SK-N-SH (cell line): ENCODE measurements at regions of chr13 and their contacts with region 1.

Region 1: DNA sequence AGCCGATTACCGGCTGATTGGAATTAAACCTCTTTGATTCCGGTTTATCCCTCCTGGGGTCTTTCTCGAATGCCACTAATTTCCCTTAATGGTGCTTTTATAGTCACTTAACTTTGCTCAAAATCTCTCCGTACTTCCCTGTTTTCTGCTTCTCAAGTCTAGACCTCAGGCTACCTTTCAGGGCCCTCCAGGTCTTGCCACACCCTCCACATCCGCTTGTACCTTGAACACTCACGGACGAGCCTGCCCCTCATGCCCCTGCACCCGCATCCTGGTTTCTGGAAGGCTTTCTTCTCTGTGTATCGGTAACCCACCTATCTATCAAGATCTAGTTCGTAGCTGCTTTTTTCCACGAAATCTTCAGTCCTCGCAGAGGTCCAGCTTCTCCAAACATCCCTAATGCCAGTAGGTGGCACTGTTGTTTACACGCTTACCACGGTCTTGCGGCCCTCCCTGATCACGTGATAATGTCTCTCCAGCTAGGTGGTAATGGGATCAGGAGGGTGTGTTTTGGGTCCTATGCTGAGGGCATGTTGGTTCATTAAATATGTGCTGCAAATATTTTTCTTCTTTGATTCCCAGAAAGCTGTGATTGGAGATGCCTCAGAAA is 13.8 kb downstream of the ATP12A start:
- DNase-seq: peak; percentile 84
- H3K4me3 ChIP-seq: peak overlapping the region in 1 of 2 experiments; percentile 29; a peak in 1 of 4 replicates
- H3K27ac ChIP-seq: no peak overlapping the region
- H3K4me1 ChIP-seq: no peaks in the 10 kb centered on the region; a peak in 1 of 4 replicates
- H3K27me3 ChIP-seq: peaks cover 35% of the 10 kb centered on the region; the same call in 1 of the 2 replicates
- CTCF ChIP-seq: peak; percentile 67
- EP300 ChIP-seq: no peak
- RAD21 ChIP-seq: peak; percentile 61

Region 2: DNA sequence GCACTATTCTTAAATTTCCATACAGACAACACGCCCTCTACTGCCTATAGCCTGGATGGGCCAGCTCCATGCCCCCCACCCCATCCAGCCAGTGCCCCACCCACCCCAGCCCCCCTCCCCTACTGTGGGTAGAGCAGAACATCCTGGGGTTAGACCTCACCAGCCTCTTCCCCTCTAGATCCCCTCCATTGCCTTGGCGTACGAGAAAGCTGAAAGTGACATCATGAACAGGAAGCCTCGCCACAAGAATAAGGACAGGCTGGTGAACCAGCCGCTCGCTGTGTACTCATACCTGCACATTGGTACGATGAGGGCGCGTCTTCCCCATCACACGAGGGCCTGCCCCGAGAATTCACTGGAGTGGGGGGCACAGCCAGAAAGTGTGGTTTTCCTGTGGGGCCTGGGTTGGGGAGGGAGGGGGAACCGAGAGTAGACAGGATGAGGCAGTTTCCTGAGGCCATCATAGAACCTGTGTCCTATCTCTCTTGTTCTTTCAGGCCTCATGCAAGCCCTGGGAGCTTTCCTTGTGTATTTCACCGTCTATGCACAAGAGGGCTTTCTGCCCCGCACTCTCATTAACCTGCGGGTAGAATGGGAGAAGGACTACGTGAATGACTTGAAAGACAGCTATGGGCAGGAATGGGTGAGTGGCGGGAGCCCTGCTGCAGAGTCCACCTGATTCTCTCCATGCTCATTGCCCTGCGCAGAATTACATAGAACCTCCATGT is 15.4 kb after region 1 on chr13:
- CTCF ChIA-PET with region 1: interaction called, 12 read pairs
- POLR2A ChIA-PET with region 1: no interaction called
- DNase-seq: no peak
- H3K4me3 ChIP-seq: no peak overlapping the region
- H3K27ac ChIP-seq: no peak overlapping the region
- H3K4me1 ChIP-seq: no peaks in the 10 kb centered on the region
- H3K27me3 ChIP-seq: no peaks in the 10 kb centered on the region; the same call in 1 of the 2 replicates
- CTCF ChIP-seq: no peak
- EP300 ChIP-seq: no peak
- RAD21 ChIP-seq: no peak

Region 3: GRCh38 chr13:24724714-24725113 is 30.7 kb after region 1 on chr13:
- CTCF ChIA-PET with region 1: interaction called, 11 read pairs
- POLR2A ChIA-PET with region 1: no interaction called
- DNase-seq: no peak
- H3K4me3 ChIP-seq: no peak overlapping the region
- H3K27ac ChIP-seq: no peak overlapping the region
- H3K4me1 ChIP-seq: no peaks in the 10 kb centered on the region
- H3K27me3 ChIP-seq: peaks cover 8% of the 10 kb centered on the region
- CTCF ChIP-seq: no peak
- EP300 ChIP-seq: no peak
- RAD21 ChIP-seq: no peak